ENCODE measurements at regions of chr1 and their contacts with region 1.

Region 1: GRCh38 chr1:93814059-93814794 is 64.8 kb downstream of the DNTTIP2 start:
- DNase-seq: peak; percentile 61
- H3K4me3 ChIP-seq: no peak overlapping the region; a peak in 1 of 4 replicates
- H3K27ac ChIP-seq: peak overlapping the region; percentile 66 to 95
- H3K4me1 ChIP-seq: peaks cover 38 to 45% of the 10 kb centered on the region in 2 experiments
- H3K27me3 ChIP-seq: no peaks in the 10 kb centered on the region
- CTCF ChIP-seq: peak; percentile 99
- EP300 ChIP-seq: peak in 1 of 2 experiments; percentile 51; a peak in 1 of 4 replicates
- RAD21 ChIP-seq: peak; percentile 100

Region 2: GRCh38 chr1:93629099-93630059 is 184.8 kb before region 1 on chr1:
- CTCF ChIA-PET with region 1: interaction called, 591 read pairs
- POLR2A ChIA-PET with region 1: no interaction called
- DNase-seq: peak; percentile 53
- H3K4me3 ChIP-seq: no peak overlapping the region; a peak in 1 of 4 replicates
- H3K27ac ChIP-seq: peak overlapping the region; percentile 53 to 98
- H3K4me1 ChIP-seq: peaks cover 27 to 41% of the 10 kb centered on the region in 2 experiments
- H3K27me3 ChIP-seq: no peaks in the 10 kb centered on the region
- CTCF ChIP-seq: peak; percentile 95
- EP300 ChIP-seq: no peak; a peak in 1 of 4 replicates
- RAD21 ChIP-seq: peak; percentile 99

Region 3: GRCh38 chr1:93680757-93681550 is 133.3 kb before region 1 on chr1:
- CTCF ChIA-PET with region 1: interaction called, 28 read pairs
- POLR2A ChIA-PET with region 1: no interaction called
- DNase-seq: peak; percentile 80
- H3K4me3 ChIP-seq: peak overlapping the region; percentile 75 to 86
- H3K27ac ChIP-seq: peak overlapping the region; percentile 86 to 95
- H3K4me1 ChIP-seq: peaks cover 19 to 24% of the 10 kb centered on the region in 2 experiments; a peak in 3 of 4 replicates
- H3K27me3 ChIP-seq: no peaks in the 10 kb centered on the region
- CTCF ChIP-seq: peak; percentile 64
- EP300 ChIP-seq: no peak
- RAD21 ChIP-seq: peak; percentile 64

Region 4: DNA sequence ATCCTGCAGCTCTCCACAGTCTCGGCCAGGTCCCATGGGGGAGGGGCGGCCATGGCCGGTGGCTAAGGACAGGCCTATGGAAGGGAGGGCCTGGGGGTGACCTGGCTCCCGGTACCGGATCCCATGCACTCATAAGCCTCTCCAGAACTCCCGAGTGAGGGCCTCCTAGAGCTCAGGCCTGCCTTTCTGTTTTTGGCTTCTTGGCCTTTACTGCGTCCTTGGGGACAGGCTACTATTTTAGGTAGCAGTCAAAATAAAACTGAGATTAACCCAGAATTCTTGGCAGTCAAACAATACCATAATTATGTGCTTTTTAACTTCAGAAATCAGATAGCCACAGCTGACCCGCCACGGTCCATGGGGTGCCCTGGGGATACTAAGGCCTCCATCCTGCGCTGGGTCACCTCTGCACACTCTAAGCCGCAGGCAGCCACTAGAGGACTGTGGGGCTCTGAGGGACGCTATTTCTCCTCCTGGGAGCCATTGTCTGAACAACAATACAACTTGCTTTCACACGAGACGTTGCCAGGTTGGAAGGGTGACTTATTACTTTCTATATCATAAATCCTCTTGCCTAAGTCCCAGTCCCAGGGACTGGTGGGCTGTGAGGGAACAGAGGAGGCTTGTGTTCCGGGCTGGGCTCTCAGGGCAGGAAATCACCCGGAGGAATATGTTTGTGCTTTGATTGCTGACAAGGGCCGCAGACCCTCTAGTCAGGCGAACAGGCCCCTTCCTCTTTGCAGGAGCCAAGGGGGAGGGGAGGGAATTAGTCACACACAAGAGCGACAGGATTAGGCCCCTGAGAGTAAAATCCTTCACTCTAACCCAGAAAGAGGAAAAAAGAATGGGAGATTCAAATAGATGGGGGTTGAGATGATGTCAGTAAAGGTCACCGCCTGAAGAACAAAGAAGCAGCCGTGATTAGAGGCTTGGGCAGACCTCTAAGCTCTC is 91.9 kb before region 1 on chr1:
- CTCF ChIA-PET with region 1: interaction called, 14 read pairs
- POLR2A ChIA-PET with region 1: no interaction called
- DNase-seq: peak; percentile 50
- H3K4me3 ChIP-seq: no peak overlapping the region
- H3K27ac ChIP-seq: peak overlapping the region; percentile 8 to 23; a peak in 2 of 4 replicates
- H3K4me1 ChIP-seq: peaks cover 8 to 19% of the 10 kb centered on the region in 2 experiments; a peak in 2 of 4 replicates
- H3K27me3 ChIP-seq: no peaks in the 10 kb centered on the region
- CTCF ChIP-seq: no peak
- EP300 ChIP-seq: no peak
- RAD21 ChIP-seq: no peak

Region 5: DNA sequence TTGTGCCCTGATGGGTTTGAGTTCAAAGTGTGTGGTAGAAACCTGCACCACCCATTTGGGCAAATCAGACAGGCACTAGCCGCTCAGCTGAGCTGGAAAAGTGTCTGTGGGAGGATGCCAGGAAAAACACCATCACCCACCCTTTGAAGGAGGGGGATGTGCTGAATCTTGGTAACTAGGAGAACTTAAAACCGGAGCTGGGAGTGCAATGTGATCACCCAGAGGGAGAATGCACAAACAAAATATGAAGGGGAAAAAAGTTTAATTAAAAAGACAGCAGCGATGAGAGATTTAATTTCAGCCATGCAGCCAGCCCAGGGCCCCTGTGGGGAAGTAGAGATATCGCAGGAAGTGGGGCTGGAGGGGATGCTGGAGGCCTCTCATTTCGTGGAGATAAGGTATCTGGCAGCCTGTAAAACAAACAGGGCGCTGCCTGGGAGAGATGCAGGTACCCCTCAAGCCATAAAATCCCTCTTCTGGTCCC is 45.8 kb before region 1 on chr1:
- CTCF ChIA-PET with region 1: interaction called, 28 read pairs
- POLR2A ChIA-PET with region 1: no interaction called
- DNase-seq: peak; percentile 70
- H3K4me3 ChIP-seq: no peak overlapping the region
- H3K27ac ChIP-seq: peak overlapping the region; percentile 11 to 75; a peak in 3 of 4 replicates
- H3K4me1 ChIP-seq: peaks cover 12 to 26% of the 10 kb centered on the region in 2 experiments; a peak in 1 of 4 replicates
- H3K27me3 ChIP-seq: no peaks in the 10 kb centered on the region
- CTCF ChIP-seq: no peak
- EP300 ChIP-seq: peak in 1 of 2 experiments; percentile 77; a peak in 2 of 4 replicates
- RAD21 ChIP-seq: no peak

Region 6: DNA sequence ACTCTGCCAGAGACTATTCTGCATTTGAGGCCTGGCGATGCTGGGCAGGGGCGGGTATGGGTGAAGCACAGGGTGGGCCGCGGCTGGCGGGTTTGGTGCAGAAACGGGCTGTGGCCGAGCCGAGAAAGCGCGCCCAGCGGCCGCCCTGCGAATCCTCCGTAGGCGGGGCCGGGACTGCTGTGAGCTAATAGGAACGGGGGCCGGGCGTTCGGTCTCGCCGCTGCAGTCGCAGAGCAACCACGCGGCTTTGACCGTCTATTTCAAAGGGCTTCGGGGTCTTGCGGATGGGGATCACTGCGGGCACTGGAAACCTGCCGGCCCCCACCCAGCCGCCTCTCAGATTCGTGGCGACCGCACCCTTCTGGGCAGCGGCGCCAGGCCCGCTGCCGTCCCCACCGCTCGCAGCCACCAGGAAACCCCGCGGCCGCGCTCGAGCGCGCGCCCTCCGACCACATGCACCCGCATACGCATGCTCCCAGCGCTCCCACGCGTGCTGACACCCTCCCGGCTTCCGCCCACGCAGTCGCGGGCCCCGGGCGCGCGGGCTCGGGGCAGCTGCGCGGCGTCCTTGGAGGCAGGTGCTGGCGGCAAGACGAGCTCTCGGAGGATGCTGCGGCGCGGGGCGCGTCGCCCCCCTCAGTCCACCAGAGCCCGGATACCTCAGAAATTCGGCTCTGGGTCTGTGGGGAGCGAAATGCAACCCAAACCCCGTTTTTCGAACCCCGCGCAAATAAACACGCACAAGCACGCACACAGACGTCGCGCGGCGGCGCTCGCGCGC is 32.2 kb after region 1 on chr1:
- CTCF ChIA-PET with region 1: interaction called, 202 read pairs
- POLR2A ChIA-PET with region 1: interaction called, 11 read pairs
- DNase-seq: peak; percentile 90
- H3K4me3 ChIP-seq: peak overlapping the region; percentile 85 to 94
- H3K27ac ChIP-seq: peak overlapping the region; percentile 88 to 96
- H3K4me1 ChIP-seq: peaks cover 23% of the 10 kb centered on the region in 2 experiments; a peak in 3 of 4 replicates
- H3K27me3 ChIP-seq: no peaks in the 10 kb centered on the region
- CTCF ChIP-seq: peak; percentile 39
- EP300 ChIP-seq: no peak
- RAD21 ChIP-seq: no peak; the same call in 1 of the 2 replicates